ENCODE measurements at regions of chr1 and their contacts with region 1.

Region 1: GRCh38 chr1:182604169-182605164 is at the start of gene RGS16:
- DNase-seq: peak; percentile 95 to 96
- ATAC-seq: peak; percentile 96 to 98 (median 97)
- H3K4me3 ChIP-seq: peak within 1 kb of the TSS; percentile 42 to 71 (median 60)
- H3K27ac ChIP-seq: peak within 1 kb of the TSS in 9 of 10 donors; percentile 15 to 75 (median 58)
- H3K4me1 ChIP-seq: peaks cover 7 to 70% (median 31%) of the 10 kb centered on the region in 9 donors
- H3K27me3 ChIP-seq: peaks cover 0 to 17% (median 0%) of the 10 kb centered on the region in 7 donors
- CTCF ChIP-seq: no peak
- total RNA-seq, gene RGS16: 0.42 to 8.7 (median 2.1) TPM

Region 2: GRCh38 chr1:182337736-182338571 is 266.5 kb before region 1 on chr1:
- intact Hi-C with region 1: no loop called
- DNase-seq: peak; percentile 15 to 35
- ATAC-seq: peak; percentile 29 to 70 (median 58)
- H3K4me3 ChIP-seq: no peak overlapping the region
- H3K27ac ChIP-seq: no peak overlapping the region
- H3K4me1 ChIP-seq: peaks cover 3 to 15% (median 9%) of the 10 kb centered on the region in 9 donors
- H3K27me3 ChIP-seq: peaks cover 0 to 4% (median 0%) of the 10 kb centered on the region in 7 donors
- CTCF ChIP-seq: no peak

Region 3: GRCh38 chr1:182781841-182782586 is 177.5 kb after region 1 on chr1:
- intact Hi-C with region 1: loop called (anchors 1 to 2 kb)
- DNase-seq: peak; percentile 69 to 79
- ATAC-seq: peak; percentile 72 to 86 (median 84)
- H3K4me3 ChIP-seq: no peak overlapping the region
- H3K27ac ChIP-seq: no peak overlapping the region
- H3K4me1 ChIP-seq: peaks cover 0 to 24% (median 3%) of the 10 kb centered on the region in 9 donors
- H3K27me3 ChIP-seq: no peaks in the 10 kb centered on the region
- CTCF ChIP-seq: peak; percentile 50 to 88 (median 83)

Region 4: GRCh38 chr1:182839209-182840065 is 235.0 kb after region 1 on chr1 and contains the start of gene DHX9:
- intact Hi-C with region 1: loop called in 1 of 10 experiments (anchors 5 kb)
- DNase-seq: peak; percentile 94 to 96
- ATAC-seq: peak; percentile 92 to 97 (median 94)
- H3K4me3 ChIP-seq: peak within 1 kb of the TSS; percentile 60 to 93 (median 76)
- H3K27ac ChIP-seq: peak within 1 kb of the TSS; percentile 70 to 94 (median 92)
- H3K4me1 ChIP-seq: peaks cover 5 to 54% (median 34%) of the 10 kb centered on the region in 9 donors
- H3K27me3 ChIP-seq: no peaks in the 10 kb centered on the region
- CTCF ChIP-seq: peak in 4 of 9 donors; percentile 15 to 43 (median 37)
- total RNA-seq, gene DHX9: 48.0 to 69.4 (median 55.2) TPM

Measured in heart right ventricle (tissue), 16 donors.